Ascending aorta (tissue), 2 donors: ENCODE measurements at regions of chr12 and their contacts with region 1.

Region 1: DNA sequence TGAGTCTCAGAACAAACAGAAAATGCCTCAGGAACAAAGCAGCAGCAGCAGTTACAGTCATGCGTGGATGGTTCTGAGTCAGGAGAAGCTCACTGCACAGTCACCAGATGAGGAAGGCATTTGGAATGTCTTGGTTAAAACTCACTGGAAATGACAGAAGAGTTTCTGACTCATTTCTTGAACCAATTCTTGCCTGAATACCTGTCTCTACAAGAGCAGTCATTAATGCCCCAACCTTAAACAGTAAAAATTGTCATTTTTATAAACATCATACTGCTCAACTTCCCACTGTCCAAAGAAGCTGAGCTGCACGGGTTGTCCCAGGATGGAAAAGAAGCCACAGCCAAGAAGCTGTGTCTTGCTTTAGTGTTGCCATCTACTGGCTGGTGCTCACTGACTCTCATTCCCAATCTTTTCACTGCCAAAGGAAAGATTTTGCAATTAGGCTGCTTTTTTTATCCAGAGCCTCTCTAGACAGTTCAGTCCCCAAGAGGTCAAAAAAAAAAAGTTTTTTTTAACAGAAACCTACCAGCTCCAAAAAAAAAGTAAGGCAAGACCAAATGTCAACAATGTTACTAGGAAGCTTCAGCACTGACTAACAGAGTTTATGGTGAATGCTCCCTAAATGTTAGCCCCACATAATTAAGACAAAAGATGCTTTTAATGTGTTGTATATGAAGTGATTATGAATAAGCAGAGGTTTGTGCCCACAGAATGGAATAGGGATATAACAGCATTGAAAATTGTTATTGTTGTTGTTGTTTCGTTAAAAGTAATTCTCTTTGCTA is 40.4 kb downstream of the KICS2 start:
- DNase-seq: peak in 1 of 2 donors; percentile 83
- H3K4me3 ChIP-seq: peak overlapping the region in 1 of 2 donors; percentile 48
- H3K27ac ChIP-seq: peak overlapping the region; percentile 73 to 84
- H3K4me1 ChIP-seq: peaks cover 0 to 9% of the 10 kb centered on the region in 2 donors
- H3K27me3 ChIP-seq: no peaks in the 10 kb centered on the region
- CTCF ChIP-seq: peak; percentile 22 to 58 (median 35)

Region 2: DNA sequence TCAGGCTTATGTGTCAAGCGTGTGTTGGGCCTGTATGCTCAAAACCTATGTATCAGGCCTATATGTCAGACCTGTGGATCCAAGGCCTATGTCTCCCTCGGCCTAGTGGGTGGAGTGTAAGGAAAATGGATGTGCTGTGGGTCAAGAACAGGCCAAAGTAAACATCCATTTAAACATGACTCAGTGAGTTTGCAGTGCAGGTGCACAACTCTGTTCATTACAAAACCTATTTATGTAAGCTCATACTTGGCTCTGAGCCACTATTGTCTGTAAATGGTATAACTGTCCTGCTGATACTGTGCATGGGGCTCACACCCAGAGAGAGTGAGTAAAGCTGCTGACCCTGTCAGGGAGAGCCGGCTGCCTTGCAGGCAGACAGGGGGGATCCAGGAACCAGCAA is 781.0 kb before region 1 on chr12:
- intact Hi-C with region 1: no loop called
- DNase-seq: no peak
- H3K4me3 ChIP-seq: no peak overlapping the region
- H3K27ac ChIP-seq: no peak overlapping the region
- H3K4me1 ChIP-seq: no peaks in the 10 kb centered on the region
- H3K27me3 ChIP-seq: no peaks in the 10 kb centered on the region
- CTCF ChIP-seq: no peak

Region 3: DNA sequence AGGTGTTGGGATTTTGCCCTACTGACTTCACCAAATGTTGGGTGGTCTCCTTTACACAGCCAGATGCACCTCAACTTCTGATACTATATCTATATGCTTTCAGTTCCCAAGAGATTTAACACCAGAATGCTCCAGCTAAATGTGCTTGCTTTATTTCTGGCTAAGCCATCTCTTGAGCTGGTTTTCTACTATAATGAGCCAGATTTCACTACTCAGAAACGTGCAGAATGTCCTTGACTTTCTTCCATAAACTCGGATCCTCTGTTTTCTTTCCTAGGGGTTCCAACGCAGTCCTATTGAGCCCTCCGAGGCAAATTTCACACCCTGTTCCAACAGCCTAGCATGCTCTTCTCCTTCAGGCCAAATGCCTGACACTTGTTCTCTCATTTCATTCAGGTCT is 713.7 kb before region 1 on chr12:
- intact Hi-C with region 1: no loop called
- DNase-seq: no peak
- H3K4me3 ChIP-seq: no peak overlapping the region
- H3K27ac ChIP-seq: no peak overlapping the region
- H3K4me1 ChIP-seq: no peaks in the 10 kb centered on the region
- H3K27me3 ChIP-seq: no peaks in the 10 kb centered on the region
- CTCF ChIP-seq: no peak

Region 4: GRCh38 chr12:64088431-64089349 is 93.0 kb before region 1 on chr12:
- intact Hi-C with region 1: loop called (anchors 2 kb)
- DNase-seq: peak; percentile 9 to 80
- H3K4me3 ChIP-seq: peak overlapping the region in 1 of 2 donors; percentile 29
- H3K27ac ChIP-seq: peak overlapping the region; percentile 26 to 36
- H3K4me1 ChIP-seq: peaks cover 5 to 15% of the 10 kb centered on the region in 2 donors
- H3K27me3 ChIP-seq: no peaks in the 10 kb centered on the region
- CTCF ChIP-seq: no peak

Region 5: DNA sequence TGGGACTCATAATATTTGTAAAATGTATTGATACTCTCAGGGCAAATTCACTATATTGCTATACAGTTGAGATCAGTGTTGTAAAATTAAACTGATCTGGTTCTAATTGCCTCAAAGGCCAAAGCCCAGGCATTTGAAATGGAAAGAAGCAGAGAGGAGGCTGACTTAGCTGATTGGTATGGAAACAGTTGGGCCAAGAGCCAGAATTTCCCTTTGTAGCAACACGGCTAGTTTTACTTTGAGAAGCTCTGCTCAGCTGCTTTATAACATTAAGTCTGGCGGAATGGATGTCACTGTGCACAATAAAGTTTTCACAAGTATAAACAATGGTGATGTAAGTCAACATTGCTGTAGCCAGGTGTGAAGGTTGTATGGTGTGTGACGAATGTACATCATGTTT is 1283.2 kb after region 1 on chr12:
- intact Hi-C with region 1: no loop called
- DNase-seq: peak in 1 of 2 donors; percentile 65
- H3K4me3 ChIP-seq: no peak overlapping the region
- H3K27ac ChIP-seq: no peak overlapping the region
- H3K4me1 ChIP-seq: no peaks in the 10 kb centered on the region
- H3K27me3 ChIP-seq: no peaks in the 10 kb centered on the region
- CTCF ChIP-seq: no peak